BJ (cell line): ENCODE measurements at regions of chr6 and their contacts with region 1.

Region 1: DNA sequence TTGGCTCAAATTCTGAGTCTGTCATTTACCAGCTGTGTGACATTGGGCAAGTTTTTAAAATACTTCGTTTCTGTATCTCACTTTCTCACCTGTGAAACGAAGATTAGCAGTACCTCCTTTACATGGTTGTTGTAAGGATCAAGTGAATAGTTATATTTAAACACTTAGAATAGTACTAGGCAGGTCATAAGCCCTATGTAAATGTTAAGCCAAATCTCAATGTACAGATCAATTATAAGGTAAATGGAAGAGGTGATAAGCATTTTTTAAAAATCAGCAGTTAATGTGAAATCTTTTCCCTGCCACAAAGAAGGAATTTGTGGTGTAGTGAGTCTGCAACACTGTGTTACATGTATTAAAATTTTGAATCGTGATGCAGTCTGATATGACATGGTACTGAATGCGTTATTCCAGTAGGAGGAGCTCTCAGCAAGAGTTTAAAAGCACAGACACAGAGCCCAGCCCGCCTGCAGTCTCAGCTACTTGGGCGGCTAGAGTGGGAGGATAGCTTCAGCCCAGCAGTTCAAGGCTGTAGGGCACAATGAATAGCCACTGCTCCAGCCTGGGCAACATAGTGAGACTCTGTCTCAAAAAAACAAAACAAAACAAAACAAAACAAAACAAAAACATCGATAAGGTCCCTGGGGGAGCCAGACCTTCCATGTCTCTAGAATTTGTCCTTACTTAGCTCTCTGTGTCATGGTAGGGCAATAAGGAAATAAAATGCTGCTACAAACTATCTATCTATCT is 46.0 kb downstream of the GTF2H5 start:
- DNase-seq: no peak
- H3K4me3 ChIP-seq: no peak overlapping the region
- H3K27me3 ChIP-seq: no peaks in the 10 kb centered on the region
- CTCF ChIP-seq: peak; percentile 75

Region 2: DNA sequence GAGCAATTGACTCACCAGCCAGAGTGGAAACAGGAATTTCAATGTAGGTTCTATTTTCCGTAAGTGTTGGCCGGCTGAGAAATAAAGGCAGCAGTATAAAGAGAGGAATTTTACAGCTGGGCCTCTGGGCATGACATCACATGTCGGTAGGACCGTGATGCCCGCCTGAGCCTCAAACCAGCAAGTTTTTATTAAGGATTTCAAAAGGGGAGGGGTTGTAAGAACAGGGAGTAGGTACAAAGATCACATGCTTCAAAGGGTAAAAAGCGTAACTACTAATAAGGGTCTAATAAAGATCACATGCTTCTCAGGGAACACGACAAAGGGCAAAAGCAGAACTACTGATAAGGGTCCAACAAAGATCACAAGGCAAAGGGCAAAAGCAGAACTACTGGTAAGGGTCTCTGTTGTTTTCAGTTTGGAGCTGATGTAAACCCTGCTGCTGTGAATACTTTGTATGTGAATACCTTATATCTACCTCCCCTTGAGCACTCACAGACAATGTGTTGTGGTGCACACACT is 89.2 kb after region 1 on chr6:
- CTCF ChIA-PET with region 1: no interaction called
- POLR2A ChIA-PET with region 1: no interaction called
- DNase-seq: no peak
- H3K4me3 ChIP-seq: no peak overlapping the region
- H3K27me3 ChIP-seq: no peaks in the 10 kb centered on the region
- CTCF ChIP-seq: no peak

Region 3: GRCh38 chr6:158373214-158373613 is 159.1 kb after region 1 on chr6:
- CTCF ChIA-PET with region 1: no interaction called
- POLR2A ChIA-PET with region 1: interaction called, 24 read pairs
- DNase-seq: no peak
- H3K4me3 ChIP-seq: no peak overlapping the region
- H3K27me3 ChIP-seq: no peaks in the 10 kb centered on the region
- CTCF ChIP-seq: no peak